Colonic mucosa (tissue), 4 donors: ENCODE measurements at regions of chr13 and their contacts with region 1.

Region 1: DNA sequence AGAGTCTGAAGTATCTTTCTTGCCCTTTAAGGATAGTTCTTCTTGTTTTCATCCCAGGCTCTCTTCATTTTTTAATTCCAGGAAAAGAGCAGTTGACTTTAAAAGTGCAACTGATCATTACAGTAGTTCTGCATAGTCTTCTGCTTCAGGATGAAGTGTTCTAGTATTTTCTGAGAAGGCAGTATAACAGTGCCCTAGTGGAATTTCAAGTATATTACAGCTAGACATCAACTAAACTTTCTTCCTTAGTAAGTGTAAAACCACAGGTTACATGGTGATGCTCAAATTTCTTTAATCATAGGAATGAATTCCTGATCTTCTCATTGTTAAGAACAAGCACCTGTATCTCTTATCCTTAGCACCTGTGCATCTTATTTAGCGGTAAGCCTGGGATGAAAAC is 10.9 kb downstream of the NUFIP1 start:
- DNase-seq: no peak
- H3K4me3 ChIP-seq: no peak overlapping the region
- H3K27ac ChIP-seq: no peak overlapping the region
- H3K4me1 ChIP-seq: no peaks in the 10 kb centered on the region
- H3K27me3 ChIP-seq: no peaks in the 10 kb centered on the region
- CTCF ChIP-seq: no peak

Region 2: GRCh38 chr13:44930963-44931623 is 47.2 kb before region 1 on chr13:
- intact Hi-C with region 1: no loop called
- DNase-seq: no peak
- H3K4me3 ChIP-seq: no peak overlapping the region
- H3K27ac ChIP-seq: no peak overlapping the region
- H3K4me1 ChIP-seq: no peaks in the 10 kb centered on the region
- H3K27me3 ChIP-seq: no peaks in the 10 kb centered on the region
- CTCF ChIP-seq: no peak

Region 3: DNA sequence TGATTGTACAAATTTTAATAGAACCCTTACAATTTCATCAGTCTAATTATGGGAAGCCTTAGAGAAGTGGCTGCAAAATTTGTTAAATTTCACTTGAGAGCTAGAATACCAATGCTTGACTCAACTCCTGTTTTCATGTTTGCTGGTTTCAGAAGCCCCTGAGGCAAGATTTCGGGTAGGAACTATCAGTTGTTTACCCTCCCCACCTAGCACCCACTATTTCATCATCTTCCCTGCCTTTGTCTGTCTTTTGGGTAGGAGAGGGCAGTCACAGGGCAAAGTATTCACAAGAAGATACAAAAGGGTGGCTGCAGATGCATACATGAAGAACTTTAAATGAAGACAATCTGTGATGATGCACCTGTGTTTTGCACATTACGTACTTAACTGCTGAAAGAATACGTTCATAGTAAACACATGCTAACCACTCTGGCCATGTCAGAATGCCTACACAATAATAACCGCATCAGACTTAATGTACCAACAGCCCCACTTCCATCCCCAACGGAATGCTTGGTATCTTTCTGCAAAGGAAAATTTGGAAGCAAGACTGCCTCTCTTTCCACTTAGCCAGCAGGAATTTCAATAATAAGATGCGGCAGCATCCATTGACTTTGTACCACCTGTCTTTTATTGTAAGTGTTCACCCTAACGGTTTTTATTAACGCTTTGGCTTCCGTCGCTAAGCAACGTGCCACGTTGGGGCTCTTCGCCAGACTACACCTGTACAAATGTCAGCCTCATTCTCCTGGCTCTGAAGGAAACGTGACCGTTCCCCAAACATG is 332.2 kb after region 1 on chr13:
- intact Hi-C with region 1: loop called (anchors 5 kb)
- DNase-seq: no peak
- H3K4me3 ChIP-seq: peak overlapping the region; percentile 45
- H3K27ac ChIP-seq: no peak overlapping the region
- H3K4me1 ChIP-seq: peaks cover 4% of the 10 kb centered on the region
- H3K27me3 ChIP-seq: no peaks in the 10 kb centered on the region
- CTCF ChIP-seq: no peak